Activated CD4-positive, alpha-beta T cell treated with anti-CD3 and anti-CD28 coated beads for 36 hours (primary cell): ENCODE measurements at regions of chr3 and their contacts with region 1.

Region 1: GRCh38 chr3:194344012-194344411 is 7.1 kb downstream of the CPN2 start:
- DNase-seq: peak; percentile 87
- ATAC-seq: peak; percentile 80
- H3K4me3 Mint-ChIP-seq: no peak overlapping the region
- H3K27ac Mint-ChIP-seq: no peak overlapping the region
- H3K4me1 Mint-ChIP-seq: no peaks in the 10 kb centered on the region
- H3K27me3 Mint-ChIP-seq: peaks cover 2% of the 10 kb centered on the region

Region 2: DNA sequence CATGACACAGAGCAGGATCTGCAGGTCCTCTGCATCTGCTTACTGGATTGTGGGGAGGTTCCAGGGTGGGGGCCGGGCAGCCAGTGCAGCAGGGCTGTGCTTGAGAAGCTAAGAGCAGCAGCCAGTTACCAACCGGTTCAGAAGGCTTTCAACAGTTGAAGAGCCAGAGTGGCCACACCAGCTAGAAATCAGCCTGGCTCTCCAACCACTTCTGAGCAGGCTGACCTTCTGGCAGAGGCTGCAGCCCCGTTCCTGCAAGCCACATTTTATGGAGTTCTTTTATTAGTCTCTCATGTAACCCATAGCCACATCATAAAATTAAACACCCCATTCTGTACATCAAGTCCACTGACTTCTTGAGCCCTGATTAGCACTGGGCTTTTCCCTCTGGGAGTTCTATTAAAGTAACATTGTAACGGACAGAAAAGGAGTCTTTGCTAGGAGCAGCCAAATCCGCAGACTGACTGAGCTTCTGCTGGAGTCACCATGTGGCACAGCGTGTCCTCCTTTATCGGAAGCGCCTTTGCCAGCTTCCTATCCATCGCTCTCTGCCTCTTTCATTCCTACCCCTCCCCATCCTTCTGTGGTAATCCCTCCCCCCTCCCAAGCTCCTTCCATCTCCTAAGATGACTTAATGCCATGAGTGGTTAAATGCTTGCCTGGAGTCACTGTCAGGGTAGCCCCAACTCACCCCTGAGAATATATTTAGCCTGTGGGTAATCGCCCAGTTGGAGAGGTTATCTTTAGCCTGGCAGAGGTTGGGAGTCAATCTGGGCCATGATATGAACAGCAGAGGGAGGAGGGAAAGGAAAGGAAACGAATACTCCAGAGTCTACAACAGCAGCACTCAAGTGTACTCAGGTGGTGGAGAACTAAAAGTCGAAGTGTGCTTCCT is 346.5 kb before region 1 on chr3:
- CTCF ChIA-PET with region 1: no interaction called
- POLR2A ChIA-PET with region 1: no interaction called
- intact Hi-C with region 1: no loop called
- DNase-seq: no peak
- ATAC-seq: no peak
- H3K4me3 Mint-ChIP-seq: no peak overlapping the region
- H3K27ac Mint-ChIP-seq: no peak overlapping the region
- H3K4me1 Mint-ChIP-seq: peaks cover 2% of the 10 kb centered on the region
- H3K27me3 Mint-ChIP-seq: peaks cover 16% of the 10 kb centered on the region

Region 3: DNA sequence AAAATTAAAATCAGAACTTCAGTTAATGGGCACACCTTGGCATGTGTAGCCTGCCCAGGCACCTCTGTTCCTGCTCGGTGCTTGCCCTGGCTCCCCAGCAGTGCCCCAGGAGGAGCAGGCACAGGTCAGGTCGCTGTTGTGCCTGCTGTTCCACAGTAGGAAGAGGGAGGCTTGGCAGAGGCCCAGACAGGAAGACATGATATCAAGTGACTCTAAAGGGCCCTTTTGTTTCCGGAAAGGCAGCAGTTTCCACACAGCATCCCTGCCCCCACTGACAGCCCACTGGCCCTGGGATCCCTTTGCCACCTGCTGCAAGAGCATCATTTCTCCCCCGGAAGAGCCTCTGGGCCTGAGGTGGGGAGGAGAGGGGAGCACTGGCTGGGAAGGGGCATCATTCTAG is 248.5 kb before region 1 on chr3:
- CTCF ChIA-PET with region 1: no interaction called
- POLR2A ChIA-PET with region 1: no interaction called
- intact Hi-C with region 1: no loop called
- DNase-seq: peak; percentile 30
- ATAC-seq: no peak
- H3K4me3 Mint-ChIP-seq: no peak overlapping the region
- H3K27ac Mint-ChIP-seq: peak overlapping the region; percentile 5
- H3K4me1 Mint-ChIP-seq: peaks cover 14% of the 10 kb centered on the region
- H3K27me3 Mint-ChIP-seq: peaks cover 3% of the 10 kb centered on the region

Region 4: DNA sequence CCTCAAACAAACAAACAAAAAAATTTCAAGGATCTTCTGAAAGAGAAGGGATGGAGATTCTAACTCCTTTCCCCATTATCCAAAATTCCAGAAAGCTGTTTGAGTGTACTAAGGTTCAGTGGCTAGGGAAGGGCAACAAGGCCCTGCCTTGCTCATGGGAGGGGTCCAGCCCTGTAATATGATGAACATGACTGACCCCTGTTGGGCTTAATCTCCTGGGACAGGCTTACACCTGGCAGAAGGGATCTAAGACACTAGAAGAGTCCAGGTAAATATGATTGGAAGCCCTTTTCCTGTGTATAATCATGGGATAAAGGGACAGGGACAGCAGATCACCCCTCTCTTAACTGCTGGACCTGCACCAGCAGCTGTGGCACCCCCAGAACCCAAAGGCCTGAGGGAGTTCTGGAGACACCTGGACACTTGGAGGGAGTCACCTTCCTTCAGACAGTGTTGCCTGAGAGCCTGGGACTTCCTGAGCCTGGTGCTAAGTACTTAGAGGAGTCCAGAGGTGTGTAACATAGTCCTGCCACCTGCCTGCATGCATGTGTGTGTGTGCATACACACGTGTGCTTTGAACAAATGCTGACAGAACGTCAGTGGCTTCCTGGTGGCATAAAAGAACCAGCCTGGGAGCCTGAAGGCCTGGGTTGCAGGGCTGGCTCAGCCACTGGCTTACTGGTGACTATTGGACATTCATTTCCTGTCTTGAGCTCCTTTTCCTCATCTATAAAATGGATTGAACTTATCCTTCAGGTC is 10.1 kb after region 1 on chr3:
- CTCF ChIA-PET with region 1: interaction called, 21 read pairs
- POLR2A ChIA-PET with region 1: no interaction called
- intact Hi-C with region 1: no loop called
- DNase-seq: no peak
- ATAC-seq: no peak
- H3K4me3 Mint-ChIP-seq: no peak overlapping the region
- H3K27ac Mint-ChIP-seq: no peak overlapping the region
- H3K4me1 Mint-ChIP-seq: no peaks in the 10 kb centered on the region
- H3K27me3 Mint-ChIP-seq: no peaks in the 10 kb centered on the region

Region 5: DNA sequence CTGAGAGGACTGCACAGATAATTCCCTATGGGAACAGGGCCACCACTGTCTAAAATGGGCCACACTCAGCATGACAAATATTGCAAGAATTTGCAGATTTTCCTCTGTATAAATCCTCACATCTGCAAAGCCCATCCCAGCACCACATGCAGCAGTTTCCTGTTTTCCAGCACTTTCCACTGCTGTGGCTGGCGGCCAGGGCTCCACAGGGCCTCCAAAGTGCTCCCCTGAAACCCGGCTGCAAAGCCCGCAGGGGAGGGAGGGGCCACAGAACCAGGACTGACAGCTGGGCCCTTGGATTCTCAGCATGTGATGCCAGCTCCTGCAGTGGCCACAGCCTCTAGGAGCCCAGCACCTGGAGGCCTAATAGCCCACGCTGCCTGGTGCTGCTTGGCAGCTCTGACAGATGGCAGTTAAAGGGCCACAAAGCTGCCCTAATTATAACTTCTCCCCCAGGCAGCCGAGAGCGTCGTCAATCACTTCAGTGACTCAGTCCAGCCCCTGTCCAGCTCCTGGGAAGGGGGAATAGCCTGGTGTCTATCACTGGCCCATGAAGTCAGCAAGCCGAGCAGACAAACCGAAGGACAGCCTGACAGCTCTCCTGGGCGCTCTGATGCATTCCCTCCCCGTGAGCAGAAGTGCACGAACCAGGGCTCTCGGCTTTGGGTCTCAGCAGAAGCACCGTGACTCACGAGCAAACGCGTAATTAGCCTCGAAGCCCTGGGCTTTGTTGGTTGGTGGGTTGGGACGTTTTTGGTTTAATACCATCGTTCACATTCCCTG is 20.8 kb after region 1 on chr3:
- CTCF ChIA-PET with region 1: interaction called, 12 read pairs
- POLR2A ChIA-PET with region 1: no interaction called
- intact Hi-C with region 1: no loop called
- DNase-seq: no peak
- ATAC-seq: no peak
- H3K4me3 Mint-ChIP-seq: no peak overlapping the region
- H3K27ac Mint-ChIP-seq: no peak overlapping the region
- H3K4me1 Mint-ChIP-seq: no peaks in the 10 kb centered on the region
- H3K27me3 Mint-ChIP-seq: peaks cover 17% of the 10 kb centered on the region

Region 6: DNA sequence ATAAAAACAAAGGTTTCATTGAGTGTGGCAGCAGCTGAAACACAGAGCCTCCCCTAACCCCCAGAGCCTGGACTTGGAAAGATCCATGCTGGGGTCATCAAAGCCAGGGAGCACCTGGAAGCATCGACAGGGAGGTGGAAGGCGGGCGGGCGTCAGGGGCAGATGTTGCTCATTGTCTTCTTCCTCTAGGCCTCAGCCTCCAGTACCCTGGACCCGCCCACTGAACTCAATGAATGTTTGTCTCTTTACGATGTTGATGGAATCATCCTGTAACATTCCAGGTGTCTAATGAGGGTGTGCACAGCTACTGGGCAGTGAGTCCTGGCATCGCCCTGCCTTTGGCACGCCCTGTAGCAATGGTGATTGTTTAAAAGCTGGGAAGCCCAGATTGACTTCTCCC is 45.3 kb after region 1 on chr3:
- CTCF ChIA-PET with region 1: interaction called, 18 read pairs
- POLR2A ChIA-PET with region 1: no interaction called
- intact Hi-C with region 1: no loop called
- DNase-seq: no peak
- ATAC-seq: no peak
- H3K4me3 Mint-ChIP-seq: no peak overlapping the region
- H3K27ac Mint-ChIP-seq: no peak overlapping the region
- H3K4me1 Mint-ChIP-seq: no peaks in the 10 kb centered on the region
- H3K27me3 Mint-ChIP-seq: no peaks in the 10 kb centered on the region

Region 7: GRCh38 chr3:194395778-194396547 is 52.0 kb after region 1 on chr3:
- CTCF ChIA-PET with region 1: interaction called, 18 read pairs
- POLR2A ChIA-PET with region 1: no interaction called
- intact Hi-C with region 1: no loop called
- DNase-seq: peak; percentile 79
- ATAC-seq: peak; percentile 73
- H3K4me3 Mint-ChIP-seq: peak overlapping the region; percentile 60
- H3K27ac Mint-ChIP-seq: peak overlapping the region; percentile 73
- H3K4me1 Mint-ChIP-seq: peaks cover 55% of the 10 kb centered on the region
- H3K27me3 Mint-ChIP-seq: peaks cover 12% of the 10 kb centered on the region

Region 8: GRCh38 chr3:194404365-194405140 is 60.5 kb after region 1 on chr3:
- CTCF ChIA-PET with region 1: interaction called, 30 read pairs
- POLR2A ChIA-PET with region 1: no interaction called
- intact Hi-C with region 1: loop called in 1 of 2 experiments (anchors 1 kb)
- DNase-seq: peak; percentile 59
- ATAC-seq: no peak
- H3K4me3 Mint-ChIP-seq: no peak overlapping the region
- H3K27ac Mint-ChIP-seq: peak overlapping the region; percentile 51
- H3K4me1 Mint-ChIP-seq: peaks cover 26% of the 10 kb centered on the region
- H3K27me3 Mint-ChIP-seq: no peaks in the 10 kb centered on the region